H1 (cell line): ENCODE measurements at regions of chr9 and their contacts with region 1.

Region 1: GRCh38 chr9:125558453-125559092 is 148.4 kb downstream of the MAPKAP1 start:
- DNase-seq: peak; percentile 33 to 68
- H3K4me3 ChIP-seq: no peak overlapping the region
- H3K27ac ChIP-seq: no peak overlapping the region
- H3K4me1 ChIP-seq: peaks cover 0 to 3% (median 0%) of the 10 kb centered on the region in 4 experiments; a peak in 2 of 7 replicates
- H3K27me3 ChIP-seq: no peaks in the 10 kb centered on the region
- CTCF ChIP-seq: peak; percentile 36 to 75 (median 66)
- EP300 ChIP-seq: no peak
- POLR2A ChIP-seq: no peak
- RAD21 ChIP-seq: peak; percentile 67 to 76

Region 2: GRCh38 chr9:125544988-125545651 is 13.5 kb before region 1 on chr9:
- CTCF ChIA-PET with region 1: interaction called, 19 read pairs
- POLR2A ChIA-PET with region 1: no interaction called
- DNase-seq: no peak
- H3K4me3 ChIP-seq: no peak overlapping the region
- H3K27ac ChIP-seq: no peak overlapping the region
- H3K4me1 ChIP-seq: peaks cover 0 to 5% (median 3%) of the 10 kb centered on the region in 4 experiments; a peak in 3 of 7 replicates
- H3K27me3 ChIP-seq: no peaks in the 10 kb centered on the region
- CTCF ChIP-seq: no peak
- EP300 ChIP-seq: no peak
- POLR2A ChIP-seq: no peak
- RAD21 ChIP-seq: no peak

Region 3: GRCh38 chr9:125589287-125589686 is 30.7 kb after region 1 on chr9:
- CTCF ChIA-PET with region 1: interaction called, 12 read pairs
- POLR2A ChIA-PET with region 1: no interaction called
- DNase-seq: no peak
- H3K4me3 ChIP-seq: no peak overlapping the region
- H3K27ac ChIP-seq: no peak overlapping the region
- H3K4me1 ChIP-seq: 0 out of 7 replicates have a peak, but pooled peaks cover 0 to 3% (median 1%) of the 10 kb centered on the region in 4 experiments
- H3K27me3 ChIP-seq: no peaks in the 10 kb centered on the region
- CTCF ChIP-seq: no peak
- EP300 ChIP-seq: no peak
- POLR2A ChIP-seq: no peak
- RAD21 ChIP-seq: no peak